GM12878 (cell line): ENCODE measurements at regions of chr18 and their contacts with region 1.

Region 1: DNA sequence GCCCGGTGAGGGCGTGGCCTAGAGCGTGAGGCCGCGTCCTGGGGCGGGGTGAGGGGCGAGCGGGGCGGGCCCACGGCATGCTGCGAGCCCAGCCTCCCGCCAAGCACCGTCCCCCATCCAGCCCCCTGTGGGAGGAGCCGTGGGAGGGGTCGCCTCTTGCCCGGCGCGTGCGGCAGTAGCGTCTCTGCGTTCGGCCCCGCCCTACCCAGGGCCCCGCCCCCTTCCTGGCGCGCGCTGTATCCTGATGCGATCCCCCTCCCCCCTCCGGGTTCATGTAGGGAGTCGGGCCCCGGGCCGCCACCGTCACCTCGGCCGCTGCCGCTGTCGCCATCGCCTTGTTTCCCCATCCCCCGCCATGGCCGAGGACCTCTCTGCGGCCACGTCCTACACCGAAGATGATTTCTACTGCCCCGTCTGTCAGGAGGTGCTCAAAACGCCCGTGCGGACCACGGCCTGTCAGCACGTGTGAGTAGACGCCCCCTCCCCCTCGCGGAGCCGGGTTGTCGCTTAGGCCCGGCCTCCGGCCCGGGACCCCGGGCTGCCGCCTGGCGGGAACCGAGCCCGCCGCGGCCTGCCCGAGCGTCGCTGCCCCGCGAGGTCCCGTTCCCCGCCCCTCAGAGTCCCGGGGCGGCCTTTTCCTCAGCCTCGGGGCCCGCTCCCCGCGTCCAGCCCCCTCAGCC is 888 bp downstream of the RNF138 start:
- DNase-seq: peak; percentile 83
- ATAC-seq: peak; percentile 92
- H3K4me3 ChIP-seq: peak overlapping the region; percentile 86
- H3K27ac ChIP-seq: peak overlapping the region; percentile 97
- H3K4me1 ChIP-seq: no peaks in the 10 kb centered on the region; the same call in 1 of the 2 replicates
- H3K27me3 ChIP-seq: no peaks in the 10 kb centered on the region
- CTCF ChIP-seq: no peak
- EP300 ChIP-seq: no peak
- POLR2A ChIP-seq: peak; percentile 84
- RAD21 ChIP-seq: no peak

Region 2: DNA sequence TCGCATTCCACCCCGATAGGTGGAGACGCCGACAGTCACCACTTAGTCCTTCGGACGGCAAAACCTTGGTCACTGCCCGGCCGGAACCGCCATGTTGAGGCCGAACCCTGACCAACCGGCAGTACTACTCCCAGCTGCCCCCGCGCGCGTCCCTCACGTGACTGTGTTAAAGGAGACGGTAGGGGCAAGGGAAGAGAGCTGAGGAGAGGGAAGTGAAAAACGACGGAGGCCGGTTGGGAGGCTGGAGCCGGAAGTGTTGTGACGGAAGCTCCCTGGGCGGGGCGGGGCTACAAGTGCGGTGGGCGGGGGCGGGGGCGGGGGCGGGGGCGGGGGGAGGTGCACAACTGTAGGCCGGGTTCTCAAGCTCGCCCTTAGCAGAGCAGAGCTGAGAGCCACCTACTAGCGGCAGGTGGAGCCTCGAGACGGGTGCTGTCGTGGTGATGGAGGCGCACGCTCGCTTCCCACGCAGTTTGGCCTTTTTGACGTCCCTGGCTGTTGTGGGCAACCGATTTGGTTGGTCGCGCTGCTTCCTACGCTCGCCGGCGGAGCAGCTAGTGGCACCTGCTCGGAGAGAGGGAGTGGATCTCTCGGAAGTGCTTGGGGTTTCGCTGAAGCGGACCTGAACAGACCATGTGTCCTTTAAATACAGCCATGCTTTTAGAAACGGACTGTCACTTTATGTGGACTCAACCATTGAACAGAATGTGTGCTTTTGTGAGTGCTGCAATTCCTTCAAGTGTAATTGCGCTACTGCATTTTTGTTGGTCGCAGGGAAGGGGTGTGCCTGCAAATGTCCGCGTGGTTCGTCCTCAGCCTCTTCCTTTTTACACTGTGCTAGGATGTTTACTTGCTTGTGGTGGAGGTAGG is 149.3 kb before region 1 on chr18 and contains the start of gene TRAPPC8:
- CTCF ChIA-PET with region 1: interaction called, 4 read pairs
- POLR2A ChIA-PET with region 1: interaction called, 4 read pairs
- RAD21 ChIA-PET with region 1: no interaction called
- SMC1A ChIA-PET with region 1: interaction called, 5 read pairs
- in situ Hi-C with region 1: no loop called
- intact Hi-C with region 1: loop called (anchors 2 kb)
- DNase-seq: peak; percentile 87
- ATAC-seq: peak; percentile 92
- H3K4me3 ChIP-seq: peak within 1 kb of the TSS; percentile 99
- H3K27ac ChIP-seq: peak within 1 kb of the TSS; percentile 87
- H3K4me1 ChIP-seq: no peaks in the 10 kb centered on the region
- H3K27me3 ChIP-seq: no peaks in the 10 kb centered on the region
- CTCF ChIP-seq: peak in 2 of 3 experiments; percentile 20 to 35; a peak in 2 of 6 replicates
- EP300 ChIP-seq: peak; percentile 9 to 61
- POLR2A ChIP-seq: peak; percentile 96
- RAD21 ChIP-seq: peak; percentile 36; the same call in 1 of the 2 replicates
- polyA plus RNA-seq, gene TRAPPC8: 13.0 to 17.2 TPM

Region 3: GRCh38 chr18:32018331-32019250 is 74.0 kb before region 1 on chr18 and contains the start of gene RNF125:
- CTCF ChIA-PET with region 1: no interaction called
- POLR2A ChIA-PET with region 1: interaction called, 3 read pairs
- RAD21 ChIA-PET with region 1: no interaction called
- SMC1A ChIA-PET with region 1: interaction called, 3 read pairs
- in situ Hi-C with region 1: no loop called
- intact Hi-C with region 1: loop called (anchors 2 kb)
- DNase-seq: peak; percentile 69
- ATAC-seq: peak; percentile 92
- H3K4me3 ChIP-seq: peak within 1 kb of the TSS; percentile 87
- H3K27ac ChIP-seq: peak within 1 kb of the TSS; percentile 59
- H3K4me1 ChIP-seq: peaks cover 10% of the 10 kb centered on the region
- H3K27me3 ChIP-seq: no peaks in the 10 kb centered on the region
- CTCF ChIP-seq: no peak
- EP300 ChIP-seq: 0 out of 4 replicates have a peak, but pooled peaks of 1 of the 2 experiments have one; percentile 7
- POLR2A ChIP-seq: peak; percentile 90
- RAD21 ChIP-seq: no peak
- polyA plus RNA-seq, gene RNF125: 0.79 to 1.3 TPM

Region 4: DNA sequence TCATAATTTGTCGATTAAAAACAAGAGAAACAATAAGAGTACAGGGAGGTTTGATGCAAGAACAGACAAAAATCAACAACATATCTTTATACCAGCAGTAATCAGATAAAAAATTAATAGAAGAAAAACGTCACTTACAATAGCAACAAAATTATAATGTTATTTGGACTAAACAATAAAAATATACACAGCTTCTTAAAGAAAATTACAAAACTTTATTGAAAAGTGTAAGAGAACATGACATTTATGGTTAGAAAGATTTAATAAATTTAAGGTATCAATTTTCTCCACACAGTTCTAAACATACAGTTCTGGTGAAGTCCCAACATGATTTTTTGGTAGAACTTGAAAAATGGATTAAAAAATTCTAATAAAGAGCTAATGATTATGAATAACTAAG is 12.0 kb after region 1 on chr18:
- CTCF ChIA-PET with region 1: interaction called, 3 read pairs
- POLR2A ChIA-PET with region 1: interaction called, 6 read pairs
- RAD21 ChIA-PET with region 1: interaction called, 4 read pairs
- SMC1A ChIA-PET with region 1: interaction called, 10 read pairs
- in situ Hi-C with region 1: no loop called
- intact Hi-C with region 1: no loop called
- DNase-seq: no peak
- ATAC-seq: no peak
- H3K4me3 ChIP-seq: no peak overlapping the region
- H3K27ac ChIP-seq: no peak overlapping the region
- H3K4me1 ChIP-seq: no peaks in the 10 kb centered on the region
- H3K27me3 ChIP-seq: no peaks in the 10 kb centered on the region
- CTCF ChIP-seq: no peak
- EP300 ChIP-seq: no peak
- POLR2A ChIP-seq: no peak
- RAD21 ChIP-seq: no peak